ENCODE measurements at regions of chr2 and their contacts with region 1.

Region 1: DNA sequence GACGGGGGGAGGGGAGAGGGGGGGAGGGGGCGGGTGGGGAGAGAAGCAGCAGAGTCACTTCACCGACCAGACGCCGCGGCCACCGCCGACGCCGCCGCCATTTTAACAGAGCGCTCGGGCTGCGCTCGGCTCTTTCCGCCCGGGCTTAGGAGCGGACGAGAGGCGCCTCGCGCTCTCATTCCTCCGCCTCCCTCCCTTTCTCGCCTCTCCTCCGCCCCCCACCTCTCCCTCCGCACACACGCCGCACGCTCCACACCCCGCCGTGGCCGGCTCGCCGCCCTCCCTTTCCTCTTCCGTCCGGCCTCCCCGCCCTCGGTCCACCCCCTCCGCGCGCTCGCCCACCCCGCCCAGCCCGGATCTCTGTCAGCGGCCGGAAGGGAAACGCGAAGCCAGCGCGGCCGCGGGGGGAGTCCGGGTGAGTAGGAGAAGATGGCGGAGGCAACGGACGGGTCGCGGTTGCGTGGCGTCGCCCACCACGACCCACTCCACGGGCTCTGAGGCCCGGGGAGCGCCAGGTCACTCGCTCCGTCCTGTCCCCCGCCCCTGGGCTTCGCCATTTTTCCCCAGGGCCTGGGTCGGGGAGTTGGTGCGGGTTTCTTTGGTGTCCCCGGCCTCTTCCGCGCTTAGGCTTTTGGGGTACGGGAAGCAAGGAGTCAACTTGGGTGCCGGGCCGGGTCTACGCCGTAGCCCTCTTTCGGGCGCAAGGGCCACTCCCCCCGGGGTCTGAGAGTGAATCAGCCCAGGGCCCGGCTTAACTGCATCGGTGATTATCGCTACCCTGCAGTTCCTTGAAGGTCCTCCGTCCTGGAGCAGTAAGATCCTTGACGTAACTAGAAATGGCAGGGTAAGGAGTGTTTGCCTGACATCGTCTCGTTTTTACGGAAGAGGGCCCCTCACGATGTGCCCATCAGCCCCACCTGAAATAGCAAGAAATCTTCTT is at the start of gene USP34:
- DNase-seq: peak; percentile 65 to 96
- H3K4me3 ChIP-seq: peak within 1 kb of the TSS; percentile 89 to 96
- H3K27ac ChIP-seq: peak within 1 kb of the TSS; percentile 98 to 99
- H3K4me1 ChIP-seq: peaks cover 0 to 9% of the 10 kb centered on the region in 2 donors
- H3K27me3 ChIP-seq: no peaks in the 10 kb centered on the region
- CTCF ChIP-seq: peak in 1 of 3 experiments; percentile 9
- total RNA-seq, gene USP34: 59.3 TPM

Region 2: GRCh38 chr2:60881047-60881932 is 589.9 kb before region 1 on chr2 and contains the start of gene REL:
- intact Hi-C with region 1: loop called (anchors 10 kb)
- DNase-seq: peak; percentile 51 to 92
- H3K4me3 ChIP-seq: peak within 1 kb of the TSS; percentile 85 to 93
- H3K27ac ChIP-seq: peak within 1 kb of the TSS; percentile 91 to 95
- H3K4me1 ChIP-seq: peaks cover 0 to 6% of the 10 kb centered on the region in 2 donors
- H3K27me3 ChIP-seq: no peaks in the 10 kb centered on the region
- CTCF ChIP-seq: no peak
- total RNA-seq, gene REL: 5.3 TPM

Region 3: GRCh38 chr2:61065715-61066709 is 405.2 kb before region 1 on chr2 and contains the start of gene SANBR:
- intact Hi-C with region 1: loop called (anchors 10 kb)
- DNase-seq: peak; percentile 24 to 88
- H3K4me3 ChIP-seq: peak within 1 kb of the TSS; percentile 88 to 91
- H3K27ac ChIP-seq: peak within 1 kb of the TSS; percentile 54 to 59
- H3K4me1 ChIP-seq: no peaks in the 10 kb centered on the region
- H3K27me3 ChIP-seq: no peaks in the 10 kb centered on the region
- CTCF ChIP-seq: no peak
- total RNA-seq, gene SANBR: 10.7 TPM

Region 4: DNA sequence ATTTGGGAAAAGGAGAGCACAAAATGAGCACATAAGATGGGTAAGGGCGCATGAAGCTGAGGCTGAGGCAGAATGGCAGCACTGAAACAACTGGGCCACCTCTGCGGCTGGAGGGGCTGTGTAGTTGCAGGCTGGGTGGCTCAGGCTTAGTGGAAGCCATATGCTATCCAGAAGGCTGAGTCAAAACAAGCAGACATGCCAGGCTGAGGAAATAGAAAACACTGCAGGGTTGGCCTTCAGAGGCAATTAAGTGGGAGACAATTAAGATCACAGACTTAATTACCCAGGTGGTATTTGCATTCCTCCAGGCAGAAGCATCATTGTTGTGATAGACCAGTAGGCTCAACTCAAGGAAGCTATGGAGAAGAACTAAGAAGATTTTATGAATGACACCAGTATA is 78.3 kb after region 1 on chr2:
- intact Hi-C with region 1: no loop called
- DNase-seq: no peak
- H3K4me3 ChIP-seq: no peak overlapping the region
- H3K27ac ChIP-seq: no peak overlapping the region
- H3K4me1 ChIP-seq: no peaks in the 10 kb centered on the region
- H3K27me3 ChIP-seq: no peaks in the 10 kb centered on the region
- CTCF ChIP-seq: no peak

Region 5: DNA sequence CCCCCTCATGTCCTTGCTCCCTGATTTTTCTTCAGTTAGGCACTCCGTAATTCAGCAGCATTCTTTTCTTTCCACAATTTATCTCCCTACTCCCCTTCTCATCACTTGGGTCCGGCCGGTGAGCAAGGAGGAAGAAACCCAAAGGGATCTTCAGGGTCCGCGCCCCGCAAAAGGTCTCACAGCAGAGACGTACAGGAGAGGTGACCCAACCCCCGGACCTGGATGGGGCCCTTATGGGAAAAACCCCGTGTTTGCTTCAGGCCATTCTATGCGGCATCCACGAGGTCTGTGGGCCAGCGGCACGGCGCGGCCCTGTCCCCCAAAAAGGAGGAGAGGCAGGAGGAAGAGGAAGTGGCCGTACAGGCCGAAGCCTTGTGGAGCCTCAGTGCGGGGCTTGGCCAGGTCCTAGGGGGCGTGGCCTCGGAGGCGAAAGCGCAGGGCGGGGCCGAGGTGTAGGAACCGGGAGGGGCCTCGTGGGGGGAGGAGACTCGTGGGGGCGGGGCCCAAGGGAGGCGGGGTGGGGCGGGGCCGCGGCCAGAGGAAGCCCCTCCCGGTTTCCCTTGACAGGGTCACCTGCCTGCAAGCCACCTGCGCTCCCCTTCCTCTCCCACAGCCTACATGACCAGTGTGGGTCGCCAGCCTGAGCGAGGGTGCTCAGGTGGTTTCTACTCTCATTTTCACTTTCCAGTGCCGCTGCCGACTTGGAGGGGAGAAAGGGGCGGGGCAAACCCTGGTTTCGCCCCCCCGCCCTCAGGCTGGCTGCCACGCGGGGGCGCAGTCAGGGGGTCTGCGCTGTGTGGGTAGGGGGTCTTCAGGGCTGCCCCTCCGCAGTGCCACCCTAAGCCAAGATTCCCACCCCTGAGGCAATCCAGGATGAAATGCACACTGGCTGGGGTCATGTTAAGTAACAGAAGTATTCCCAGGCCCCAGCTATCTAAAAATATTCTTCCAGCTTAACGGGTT is 223.4 kb after region 1 on chr2:
- intact Hi-C with region 1: loop called (anchors 5 kb)
- DNase-seq: peak; percentile 66 to 96
- H3K4me3 ChIP-seq: peak overlapping the region; percentile 63 to 71
- H3K27ac ChIP-seq: peak overlapping the region; percentile 61 to 67
- H3K4me1 ChIP-seq: no peaks in the 10 kb centered on the region
- H3K27me3 ChIP-seq: no peaks in the 10 kb centered on the region
- CTCF ChIP-seq: peak; percentile 23 to 62 (median 33)

Region 6: DNA sequence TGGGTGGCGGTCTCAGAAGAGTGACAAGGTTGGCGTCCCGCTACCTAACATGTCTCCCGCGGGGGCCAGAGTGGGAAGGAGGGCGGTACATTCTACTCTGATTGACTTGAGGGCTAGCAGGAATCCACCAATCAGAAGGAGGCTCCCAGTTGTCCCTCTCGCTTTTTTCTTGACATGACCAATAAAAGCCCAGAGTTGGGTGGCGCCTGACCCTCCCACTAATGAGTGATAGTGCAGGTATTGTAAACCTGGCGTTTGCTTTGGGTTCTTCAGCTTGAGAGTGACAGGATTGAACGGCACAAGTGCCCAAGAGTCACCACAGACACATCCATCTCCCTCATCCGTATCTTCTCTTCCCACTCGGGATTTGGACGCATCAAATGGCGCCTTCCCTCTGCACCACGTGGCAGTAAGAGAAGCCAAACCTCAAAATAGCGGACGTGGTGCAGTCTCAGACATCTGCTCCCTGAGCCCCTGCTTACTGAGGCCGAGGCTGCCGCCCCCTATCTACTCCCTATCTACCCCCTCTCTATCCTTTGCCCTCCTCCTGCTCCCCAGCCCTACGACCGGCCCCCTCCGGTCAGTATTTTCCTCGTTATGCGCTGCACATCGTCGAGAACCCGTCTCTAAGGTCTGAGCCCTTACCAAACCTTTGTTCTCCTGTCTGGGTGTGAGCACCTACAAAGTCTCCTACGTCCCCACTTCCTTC is 383.4 kb after region 1 on chr2:
- intact Hi-C with region 1: loop called (anchors 5 kb)
- DNase-seq: peak; percentile 76 to 94
- H3K4me3 ChIP-seq: peak overlapping the region; percentile 76 to 94
- H3K27ac ChIP-seq: peak overlapping the region; percentile 93 to 95
- H3K4me1 ChIP-seq: peaks cover 0 to 4% of the 10 kb centered on the region in 2 donors
- H3K27me3 ChIP-seq: no peaks in the 10 kb centered on the region
- CTCF ChIP-seq: no peak

Region 7: DNA sequence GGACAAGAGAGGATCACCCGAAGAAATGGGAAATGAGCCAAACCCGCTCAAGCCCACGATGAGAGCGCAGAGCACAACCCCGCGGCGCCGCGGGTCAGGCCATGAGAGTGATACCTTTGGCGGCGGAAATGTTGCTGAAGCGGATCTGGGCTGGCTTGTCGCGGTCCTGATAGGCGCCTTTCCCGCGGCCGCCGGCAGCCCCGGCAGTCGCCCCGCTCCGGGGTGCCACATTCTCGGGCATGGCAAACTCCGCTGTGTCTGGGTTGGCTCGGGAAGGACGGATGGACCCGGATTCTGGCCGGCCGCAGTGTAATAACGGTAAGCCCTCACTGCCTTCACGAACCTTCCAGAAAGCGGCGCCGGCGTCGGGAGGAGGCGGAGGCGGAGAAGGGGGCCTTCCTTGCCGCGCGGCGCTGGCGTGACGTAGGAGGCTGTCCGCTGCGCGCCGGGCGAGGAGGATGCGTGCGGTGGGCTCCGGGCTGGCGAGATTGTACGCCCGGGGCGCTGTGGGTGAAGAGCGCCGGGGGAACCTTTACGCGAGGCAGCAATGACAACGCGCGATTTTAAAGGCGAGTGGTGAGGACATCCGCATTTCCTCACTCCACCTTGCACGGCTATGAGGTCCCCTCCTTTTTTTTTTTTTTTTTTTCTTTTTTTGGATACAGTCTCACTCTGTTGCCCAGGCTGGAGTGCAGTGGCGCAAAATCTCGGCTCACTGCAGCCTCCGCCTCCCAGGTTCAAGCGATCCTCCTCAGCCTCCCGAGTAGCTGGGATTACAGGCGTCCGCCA is 417.2 kb after region 1 on chr2 and contains the start of gene CCT4:
- intact Hi-C with region 1: loop called (anchors 2 kb)
- DNase-seq: peak; percentile 38 to 91
- H3K4me3 ChIP-seq: peak within 1 kb of the TSS; percentile 76 to 99
- H3K27ac ChIP-seq: peak within 1 kb of the TSS; percentile 92 to 97
- H3K4me1 ChIP-seq: peaks cover 3 to 6% of the 10 kb centered on the region in 2 donors
- H3K27me3 ChIP-seq: no peaks in the 10 kb centered on the region
- CTCF ChIP-seq: no peak
- total RNA-seq, gene CCT4: 35.3 TPM